Activated CD4-positive, alpha-beta memory T cell treated with anti-CD3 and anti-CD28 coated beads for 36 hours (primary cell): ENCODE measurements at regions of chr22 and their contacts with region 1.

Region 1: GRCh38 chr22:39932918-39933649 is 27.1 kb upstream of the TMA7B start:
- DNase-seq: peak; percentile 76
- H3K4me3 Mint-ChIP-seq: peak overlapping the region; percentile 74
- H3K27ac Mint-ChIP-seq: peak overlapping the region; percentile 79
- H3K4me1 Mint-ChIP-seq: peaks cover 58% of the 10 kb centered on the region
- H3K27me3 Mint-ChIP-seq: no peaks in the 10 kb centered on the region

Region 2: DNA sequence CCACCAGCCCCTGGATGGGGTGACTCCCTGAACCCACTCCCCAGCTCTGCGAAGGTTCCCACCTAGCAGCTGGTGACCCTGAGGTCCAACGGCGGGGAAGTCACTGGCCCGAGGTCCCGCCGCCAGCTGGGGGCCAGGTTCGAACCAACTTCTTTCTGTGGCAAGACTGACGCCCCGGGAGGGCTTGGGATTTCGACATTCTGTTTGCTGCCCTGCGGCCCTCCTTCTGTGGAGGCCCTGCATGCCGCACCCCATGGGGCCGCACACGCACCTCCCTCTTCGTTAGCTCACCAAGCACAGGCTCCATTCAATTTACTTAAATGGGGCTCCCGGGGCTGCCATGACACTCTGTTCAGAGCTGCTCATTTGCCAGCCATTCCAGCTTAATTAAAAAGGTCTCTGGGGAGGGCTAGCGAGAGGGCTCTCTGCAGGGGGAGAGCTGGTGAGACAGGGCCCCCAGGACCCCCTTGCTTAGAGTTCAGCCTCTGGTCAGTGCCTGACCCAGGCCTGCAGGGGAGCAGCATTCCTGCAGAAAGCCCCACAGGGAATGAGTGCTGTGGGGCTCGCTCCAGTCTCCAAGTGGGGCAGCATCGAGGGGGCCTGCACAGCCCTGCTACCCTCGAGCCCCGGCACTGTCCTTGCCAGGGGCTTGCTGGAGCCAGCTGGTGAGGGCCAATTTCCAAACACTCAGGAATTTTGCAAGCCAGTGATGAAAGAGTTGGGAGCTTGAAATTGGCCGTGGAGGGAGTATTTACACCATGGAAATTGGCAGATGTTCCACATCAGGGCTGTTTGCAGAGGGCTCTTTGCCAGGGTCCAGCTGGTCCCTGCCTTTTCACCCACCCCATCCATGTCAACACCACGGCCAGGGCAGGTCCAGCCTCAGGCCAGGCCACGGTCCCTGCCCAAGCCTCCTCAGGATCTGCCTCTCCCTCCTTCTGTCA is 281.8 kb before region 1 on chr22:
- CTCF ChIA-PET with region 1: no interaction called
- POLR2A ChIA-PET with region 1: no interaction called
- intact Hi-C with region 1: no loop called
- DNase-seq: no peak
- H3K4me3 Mint-ChIP-seq: no peak overlapping the region
- H3K27ac Mint-ChIP-seq: no peak overlapping the region
- H3K4me1 Mint-ChIP-seq: no peaks in the 10 kb centered on the region
- H3K27me3 Mint-ChIP-seq: no peaks in the 10 kb centered on the region

Region 3: GRCh38 chr22:39908737-39909136 is 24.3 kb before region 1 on chr22:
- CTCF ChIA-PET with region 1: interaction called, 45 read pairs
- POLR2A ChIA-PET with region 1: interaction called, 219 read pairs
- intact Hi-C with region 1: loop called (anchors 5 kb)
- DNase-seq: peak; percentile 69
- H3K4me3 Mint-ChIP-seq: peak overlapping the region; percentile 83
- H3K27ac Mint-ChIP-seq: peak overlapping the region; percentile 93
- H3K4me1 Mint-ChIP-seq: peaks cover 58% of the 10 kb centered on the region
- H3K27me3 Mint-ChIP-seq: no peaks in the 10 kb centered on the region

Region 4: GRCh38 chr22:39946503-39947219 is 13.6 kb after region 1 on chr22:
- CTCF ChIA-PET with region 1: interaction called, 37 read pairs
- POLR2A ChIA-PET with region 1: interaction called, 3 read pairs
- intact Hi-C with region 1: loop called (anchors 1 kb)
- DNase-seq: no peak
- H3K4me3 Mint-ChIP-seq: peak overlapping the region; percentile 51
- H3K27ac Mint-ChIP-seq: peak overlapping the region; percentile 86
- H3K4me1 Mint-ChIP-seq: peaks cover 93% of the 10 kb centered on the region
- H3K27me3 Mint-ChIP-seq: no peaks in the 10 kb centered on the region

Region 5: DNA sequence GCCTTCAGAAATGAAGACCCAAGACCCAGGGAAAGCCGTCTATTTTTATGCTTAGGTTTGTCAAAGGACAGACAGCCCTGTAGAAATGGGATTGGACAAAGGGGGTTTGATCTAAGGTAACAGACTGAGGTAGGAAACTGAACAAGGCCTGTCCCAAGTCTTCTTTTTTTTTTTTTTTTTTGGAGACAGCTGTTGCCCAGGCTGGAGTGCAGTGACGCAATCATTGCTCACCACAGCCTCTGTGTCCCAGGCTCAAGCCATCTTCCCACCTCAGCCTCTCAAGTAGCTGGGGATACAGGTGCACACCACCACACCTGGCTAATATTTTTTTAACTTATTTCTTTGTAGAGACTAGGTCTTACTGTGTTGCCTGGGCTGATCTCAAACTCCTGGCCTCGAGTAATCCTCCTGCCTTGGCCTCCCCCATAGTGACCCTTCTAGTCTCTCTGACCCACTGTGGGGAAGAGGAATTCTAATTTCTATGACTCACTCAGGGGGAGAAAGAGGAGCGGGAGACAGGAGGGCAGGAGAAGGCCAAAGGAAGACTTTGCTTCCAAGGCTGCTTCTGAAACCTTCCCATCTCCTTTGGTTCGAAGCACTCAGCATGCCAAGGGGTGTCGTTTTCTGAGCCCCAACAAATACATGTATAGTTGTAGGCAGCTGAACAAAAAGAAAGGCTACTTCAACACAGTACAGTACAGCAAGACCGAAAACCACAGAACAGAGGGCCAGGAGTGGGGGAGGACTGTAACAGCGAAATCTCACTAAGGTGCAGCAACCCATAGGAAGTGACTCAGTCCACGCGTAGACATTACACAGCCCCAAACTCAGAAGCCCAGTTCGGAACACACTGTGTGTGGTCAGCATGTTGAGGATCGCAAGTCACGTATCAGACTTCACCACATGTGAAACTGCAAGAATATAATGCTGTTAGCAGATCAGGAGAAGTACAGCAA is 28.0 kb after region 1 on chr22:
- CTCF ChIA-PET with region 1: interaction called, 3 read pairs
- POLR2A ChIA-PET with region 1: no interaction called
- intact Hi-C with region 1: loop called (anchors 1 kb)
- DNase-seq: peak; percentile 90
- H3K4me3 Mint-ChIP-seq: peak overlapping the region; percentile 28
- H3K27ac Mint-ChIP-seq: peak overlapping the region; percentile 80
- H3K4me1 Mint-ChIP-seq: peaks cover 60% of the 10 kb centered on the region
- H3K27me3 Mint-ChIP-seq: no peaks in the 10 kb centered on the region

Region 6: GRCh38 chr22:40009292-40009769 is 76.2 kb after region 1 on chr22:
- CTCF ChIA-PET with region 1: no interaction called
- POLR2A ChIA-PET with region 1: no interaction called
- intact Hi-C with region 1: no loop called
- DNase-seq: no peak
- H3K4me3 Mint-ChIP-seq: no peak overlapping the region
- H3K27ac Mint-ChIP-seq: no peak overlapping the region
- H3K4me1 Mint-ChIP-seq: peaks cover 13% of the 10 kb centered on the region
- H3K27me3 Mint-ChIP-seq: peaks cover 25% of the 10 kb centered on the region